PC-9 (cell line): ENCODE measurements at regions of chr7 and their contacts with region 1.

Region 1: DNA sequence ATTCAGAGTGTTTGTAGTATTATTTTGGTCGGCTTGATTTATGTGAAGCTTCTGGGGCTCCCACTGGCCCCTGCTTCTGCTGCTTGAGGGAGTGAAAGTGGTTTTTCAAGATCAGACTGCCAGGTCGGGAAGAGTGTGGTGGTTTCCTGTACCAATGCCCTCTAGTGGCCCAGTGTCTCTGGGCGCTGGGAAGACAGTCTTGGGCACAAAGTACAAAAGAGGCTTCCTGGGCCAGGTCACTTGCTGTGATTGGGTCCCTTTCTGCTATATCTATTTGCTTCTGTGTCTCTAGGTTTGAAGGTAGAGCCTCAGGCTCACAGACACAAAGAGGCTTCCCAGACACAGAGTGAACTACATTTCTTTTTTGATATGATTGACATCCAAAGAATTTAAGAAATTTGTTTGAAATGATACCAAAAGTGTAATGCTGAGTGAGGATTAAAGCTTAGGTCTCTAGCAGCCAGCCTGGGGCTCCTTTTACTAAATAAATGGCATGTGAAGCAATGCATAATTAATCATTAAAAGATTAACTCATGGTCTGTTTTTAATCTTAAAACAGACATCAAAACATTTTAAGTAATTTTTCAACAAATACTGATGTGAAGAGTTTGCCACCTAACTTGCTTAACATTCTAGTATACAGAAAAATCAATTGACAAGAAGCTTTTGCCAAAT is 36.3 kb downstream of the ABCB1 start:
- DNase-seq: peak in 1 of 2 experiments; percentile 36
- H3K4me3 ChIP-seq: no peak overlapping the region
- H3K27ac ChIP-seq: no peak overlapping the region
- H3K4me1 ChIP-seq: no peaks in the 10 kb centered on the region
- H3K27me3 ChIP-seq: no peaks in the 10 kb centered on the region
- CTCF ChIP-seq: peak; percentile 58; the same call in 1 of the 2 replicates

Region 2: DNA sequence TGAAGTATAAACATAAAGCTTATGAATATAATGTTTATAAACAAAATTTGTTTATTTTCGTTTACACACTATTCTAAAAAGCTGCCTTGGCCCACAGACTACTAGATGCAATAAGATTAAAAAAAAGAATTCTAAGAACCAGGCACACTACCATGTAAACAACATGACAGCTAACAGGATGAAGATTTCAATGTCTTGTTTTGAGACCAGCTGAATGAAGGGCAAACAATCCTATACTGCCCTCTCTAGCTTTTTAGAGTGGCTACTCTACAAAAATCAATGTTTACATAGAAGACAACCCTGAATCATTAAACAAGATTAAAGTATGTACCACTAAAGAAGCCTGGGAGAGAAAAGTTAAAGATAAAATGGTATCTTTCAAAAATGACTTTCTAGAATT is 273.2 kb after region 1 on chr7:
- CTCF ChIA-PET with region 1: no interaction called
- POLR2A ChIA-PET with region 1: no interaction called
- intact Hi-C with region 1: no loop called
- DNase-seq: no peak
- H3K4me3 ChIP-seq: no peak overlapping the region
- H3K27ac ChIP-seq: no peak overlapping the region
- H3K4me1 ChIP-seq: no peaks in the 10 kb centered on the region
- H3K27me3 ChIP-seq: no peaks in the 10 kb centered on the region
- CTCF ChIP-seq: no peak

Region 3: GRCh38 chr7:88202278-88202677 is 637.9 kb after region 1 on chr7:
- CTCF ChIA-PET with region 1: interaction called, 11 read pairs
- POLR2A ChIA-PET with region 1: no interaction called
- intact Hi-C with region 1: no loop called
- DNase-seq: no peak
- H3K4me3 ChIP-seq: no peak overlapping the region
- H3K27ac ChIP-seq: no peak overlapping the region; the same call in 1 of the 2 replicates
- H3K4me1 ChIP-seq: no peaks in the 10 kb centered on the region
- H3K27me3 ChIP-seq: no peaks in the 10 kb centered on the region
- CTCF ChIP-seq: no peak

Region 4: DNA sequence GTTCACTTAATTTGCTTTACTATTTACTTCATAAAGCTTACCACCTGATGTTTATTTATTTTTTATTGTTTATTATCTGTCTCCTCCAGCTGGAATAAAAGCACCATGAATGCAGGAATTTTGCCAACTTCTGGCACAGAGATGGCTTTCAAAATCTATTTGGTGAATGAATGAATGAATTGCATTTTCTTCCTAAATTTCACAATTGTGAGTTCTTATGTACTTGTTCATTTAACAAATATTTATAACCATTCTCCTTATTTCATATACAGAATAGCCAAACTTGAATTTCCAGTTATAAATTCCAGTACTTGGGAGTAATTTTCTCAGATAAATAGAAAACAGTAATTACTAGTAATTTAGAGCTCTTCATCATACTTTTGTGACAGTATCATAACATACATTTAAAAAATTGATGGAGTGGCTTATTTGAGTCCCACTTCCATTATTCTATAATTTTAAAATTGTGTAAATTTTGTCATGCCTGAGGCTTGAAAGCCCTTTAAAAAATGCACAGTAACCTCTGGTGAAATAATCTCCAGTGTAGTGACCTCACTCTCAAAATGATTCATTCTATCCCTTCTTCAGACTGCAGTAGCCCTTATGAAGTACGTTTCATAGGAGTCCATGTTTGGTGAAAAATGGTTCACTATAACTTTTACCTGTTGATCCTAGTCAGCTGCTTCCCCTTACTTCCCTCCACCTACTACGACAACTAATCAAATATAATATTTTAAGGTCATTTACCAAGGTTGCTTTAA is 695.4 kb after region 1 on chr7:
- CTCF ChIA-PET with region 1: no interaction called
- POLR2A ChIA-PET with region 1: no interaction called
- intact Hi-C with region 1: no loop called
- DNase-seq: peak in 1 of 2 experiments; percentile 85
- H3K4me3 ChIP-seq: no peak overlapping the region
- H3K27ac ChIP-seq: peak overlapping the region; percentile 85
- H3K4me1 ChIP-seq: peaks cover 63% of the 10 kb centered on the region
- H3K27me3 ChIP-seq: no peaks in the 10 kb centered on the region
- CTCF ChIP-seq: no peak